Left cardiac atrium (tissue), 4 donors: ENCODE measurements at regions of chr3 and their contacts with region 1.

Region 1: DNA sequence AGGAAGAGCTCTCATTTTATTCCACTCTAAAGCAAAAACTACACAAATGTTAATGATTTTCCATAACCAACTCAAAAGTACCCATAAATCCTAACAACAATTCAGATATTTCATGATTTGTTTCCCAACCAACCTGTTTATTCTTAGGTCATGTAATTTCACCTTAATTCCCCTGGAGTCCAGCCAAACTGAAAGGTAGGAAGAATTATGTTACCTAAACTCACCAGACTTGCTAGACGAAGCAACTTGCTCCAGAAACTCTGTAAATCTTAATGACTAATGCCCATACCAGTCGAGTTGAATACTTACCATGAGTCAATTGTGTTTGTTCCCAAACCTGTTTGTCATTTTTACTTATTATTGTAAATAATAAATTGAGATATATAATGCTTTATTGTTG is 1030.0 kb downstream of the TBL1XR1 start:
- DNase-seq: no peak
- ATAC-seq: no peak

Region 2: GRCh38 chr3:176183181-176183580 is 15.9 kb after region 1 on chr3:
- intact Hi-C with region 1: loop called in 1 of 2 experiments (anchors 2 kb)
- DNase-seq: no peak
- ATAC-seq: no peak

Region 3: GRCh38 chr3:176313426-176313825 is 146.2 kb after region 1 on chr3:
- intact Hi-C with region 1: no loop called
- DNase-seq: no peak
- ATAC-seq: no peak